ENCODE measurements at regions of chr6 and their contacts with region 1.

Region 1: GRCh38 chr6:116450769-116451740 is 10.1 kb upstream of the CALHM6 start:
- DNase-seq: no peak
- ATAC-seq: peak; percentile 93
- H3K4me3 Mint-ChIP-seq: peak overlapping the region; percentile 6
- H3K27ac Mint-ChIP-seq: peak overlapping the region; percentile 70
- H3K4me1 Mint-ChIP-seq: peaks cover 31% of the 10 kb centered on the region
- H3K27me3 Mint-ChIP-seq: no peaks in the 10 kb centered on the region
- CTCF ChIP-seq: no peak

Region 2: DNA sequence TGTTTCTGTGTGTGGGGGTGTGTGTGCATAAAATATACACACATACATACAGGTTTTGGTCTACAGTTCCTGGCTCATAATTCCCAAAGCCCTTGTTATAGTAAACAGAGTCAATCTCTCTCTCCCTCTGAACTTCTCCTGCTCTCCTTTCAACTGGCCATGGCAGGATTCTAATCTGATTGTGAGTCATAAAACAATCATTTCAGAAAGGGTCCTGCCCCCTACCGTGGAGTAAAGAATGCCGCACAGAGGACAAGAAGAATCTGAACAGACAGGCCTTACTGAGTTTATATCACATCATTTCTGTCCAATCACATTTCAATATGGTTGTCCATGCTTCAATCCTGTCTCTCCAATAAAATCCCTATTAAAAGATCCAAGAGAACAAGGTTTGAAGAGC is 807.3 kb before region 1 on chr6:
- CTCF ChIA-PET with region 1: no interaction called
- POLR2A ChIA-PET with region 1: no interaction called
- intact Hi-C with region 1: no loop called
- DNase-seq: no peak
- ATAC-seq: no peak
- H3K4me3 Mint-ChIP-seq: no peak overlapping the region
- H3K27ac Mint-ChIP-seq: no peak overlapping the region
- H3K4me1 Mint-ChIP-seq: no peaks in the 10 kb centered on the region
- H3K27me3 Mint-ChIP-seq: no peaks in the 10 kb centered on the region
- CTCF ChIP-seq: no peak

Region 3: DNA sequence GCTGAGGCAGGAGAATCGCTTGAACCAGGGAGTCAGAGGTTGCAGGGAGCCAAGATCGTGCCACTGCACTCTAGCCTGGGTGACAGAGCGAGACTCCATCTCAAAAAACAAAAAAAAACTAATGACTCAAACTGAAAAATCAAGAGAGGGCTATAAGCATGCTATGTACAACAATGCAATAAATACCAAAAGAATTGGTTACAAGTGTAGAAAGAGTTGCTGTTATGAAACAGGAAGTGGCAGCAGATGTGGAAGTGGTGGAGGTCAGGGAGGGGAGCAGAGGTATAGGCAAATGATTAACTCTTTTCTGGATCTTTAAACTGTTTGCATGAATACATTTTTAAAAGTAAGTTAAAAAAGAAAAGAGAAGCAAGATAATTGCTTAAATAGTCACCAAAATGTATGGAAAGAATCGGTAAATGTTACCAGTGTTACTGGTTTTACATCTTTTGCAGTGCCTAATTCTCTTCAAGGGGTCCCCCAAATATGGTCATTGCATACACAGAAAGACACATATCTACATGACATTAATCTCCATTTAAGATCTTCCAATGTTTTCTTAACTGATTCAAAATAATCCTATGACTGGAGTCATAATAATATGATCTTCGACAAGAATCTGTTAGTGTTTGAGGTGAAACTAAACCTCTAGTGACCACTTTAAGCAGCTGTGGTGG is 25.1 kb after region 1 on chr6:
- CTCF ChIA-PET with region 1: no interaction called
- POLR2A ChIA-PET with region 1: no interaction called
- intact Hi-C with region 1: loop called (anchors 2 kb)
- DNase-seq: no peak
- ATAC-seq: peak; percentile 97
- H3K4me3 Mint-ChIP-seq: peak overlapping the region; percentile 70
- H3K27ac Mint-ChIP-seq: peak overlapping the region; percentile 93
- H3K4me1 Mint-ChIP-seq: peaks cover 34% of the 10 kb centered on the region
- H3K27me3 Mint-ChIP-seq: no peaks in the 10 kb centered on the region
- CTCF ChIP-seq: no peak